H1 (cell line): ENCODE measurements at regions of chr1 and their contacts with region 1.

Region 1: DNA sequence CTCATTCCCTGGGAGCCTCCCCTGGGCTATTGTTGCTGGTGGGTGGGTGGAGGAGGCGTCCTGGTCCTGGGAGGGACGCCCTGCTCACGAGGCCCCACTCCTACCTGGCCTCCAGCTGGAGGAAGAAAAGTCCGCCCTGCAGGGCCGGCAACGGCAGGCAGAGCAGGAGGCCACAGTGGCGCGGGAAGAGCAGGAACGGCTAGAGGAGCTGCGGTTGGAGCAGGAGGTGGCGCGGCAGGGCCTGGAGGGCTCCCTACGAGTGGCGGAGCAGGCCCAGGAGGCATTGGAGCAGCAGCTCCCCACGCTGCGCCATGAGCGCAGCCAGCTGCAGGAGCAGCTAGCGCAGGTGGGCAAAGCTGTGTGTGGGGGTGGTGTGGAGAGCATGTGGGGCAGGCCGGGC is 24.9 kb downstream of the CROCC start:
- DNase-seq: no peak
- H3K4me3 ChIP-seq: no peak overlapping the region
- H3K27ac ChIP-seq: no peak overlapping the region
- H3K4me1 ChIP-seq: no peaks in the 10 kb centered on the region
- H3K27me3 ChIP-seq: no peaks in the 10 kb centered on the region
- CTCF ChIP-seq: no peak
- EP300 ChIP-seq: no peak
- POLR2A ChIP-seq: no peak
- RAD21 ChIP-seq: no peak

Region 2: GRCh38 chr1:16618719-16619118 is 327.9 kb before region 1 on chr1:
- CTCF ChIA-PET with region 1: interaction called, 59 read pairs
- POLR2A ChIA-PET with region 1: interaction called, 8 read pairs
- DNase-seq: peak; percentile 64 to 93
- H3K4me3 ChIP-seq: no peak overlapping the region
- H3K27ac ChIP-seq: no peak overlapping the region
- H3K4me1 ChIP-seq: peaks cover 0 to 3% (median under 1%) of the 10 kb centered on the region in 4 experiments; a peak in 3 of 7 replicates
- H3K27me3 ChIP-seq: peaks cover 6 to 17% (median 14%) of the 10 kb centered on the region in 4 experiments
- CTCF ChIP-seq: peak in 2 of 3 experiments; percentile 44 to 59; a peak in 3 of 4 replicates
- EP300 ChIP-seq: no peak
- POLR2A ChIP-seq: no peak
- RAD21 ChIP-seq: peak; percentile 47 to 54

Region 3: GRCh38 chr1:16883008-16883407 is 63.6 kb before region 1 on chr1:
- CTCF ChIA-PET with region 1: no interaction called
- POLR2A ChIA-PET with region 1: no interaction called
- DNase-seq: no peak
- H3K4me3 ChIP-seq: no peak overlapping the region
- H3K27ac ChIP-seq: no peak overlapping the region
- H3K4me1 ChIP-seq: no peaks in the 10 kb centered on the region
- H3K27me3 ChIP-seq: no peaks in the 10 kb centered on the region
- CTCF ChIP-seq: no peak
- EP300 ChIP-seq: no peak
- POLR2A ChIP-seq: no peak
- RAD21 ChIP-seq: no peak

Region 4: DNA sequence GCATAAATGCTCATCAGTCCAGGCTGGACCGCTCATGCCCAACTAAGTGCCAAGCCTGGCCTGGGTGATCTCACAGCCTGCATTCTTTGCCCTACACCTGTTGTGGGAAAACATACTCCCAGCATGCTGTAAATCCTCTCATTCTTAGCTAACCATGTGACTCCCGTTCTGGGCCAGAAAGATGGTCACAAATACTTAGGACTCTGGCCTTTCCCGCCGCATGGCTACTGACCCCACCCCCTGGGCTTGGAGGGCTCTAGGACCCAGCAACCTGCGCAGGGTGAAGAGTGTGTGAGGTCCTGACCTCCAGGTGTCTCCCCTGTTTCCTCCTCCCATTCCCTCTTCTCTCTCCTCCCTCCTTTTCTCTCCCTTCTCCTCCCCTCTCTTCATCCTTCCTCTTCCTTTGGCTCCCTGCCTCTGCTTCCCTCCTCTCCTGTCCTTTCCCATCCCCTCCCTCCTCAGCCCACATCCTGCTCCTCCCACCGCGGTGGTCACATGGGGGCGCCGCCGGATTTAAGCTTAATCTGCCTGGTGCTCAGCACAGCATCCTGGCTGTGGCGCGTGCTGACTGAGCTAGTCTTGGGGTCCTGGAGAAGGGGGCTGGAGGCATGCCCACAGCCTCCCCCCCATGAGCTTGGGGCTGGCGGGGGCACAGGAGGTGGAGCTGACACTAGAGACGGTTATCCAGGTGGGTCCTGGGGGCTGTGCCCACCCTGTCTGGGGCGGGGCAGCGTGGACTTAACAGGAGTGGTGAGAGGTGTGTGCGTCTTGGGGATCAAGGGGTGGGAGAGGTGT is 25.1 kb before region 1 on chr1 and contains the start of gene CROCC:
- CTCF ChIA-PET with region 1: interaction called, 11 read pairs
- POLR2A ChIA-PET with region 1: interaction called, 4 read pairs
- DNase-seq: peak; percentile 75 to 88
- H3K4me3 ChIP-seq: peak within 1 kb of the TSS; percentile 42 to 79 (median 54)
- H3K27ac ChIP-seq: 0 out of 2 replicates have a peak within 1 kb of the TSS, but pooled peaks have one; percentile 32
- H3K4me1 ChIP-seq: peaks cover 0 to 29% (median 16%) of the 10 kb centered on the region in 4 experiments; a peak in 6 of 7 replicates
- H3K27me3 ChIP-seq: no peaks in the 10 kb centered on the region
- CTCF ChIP-seq: peak in 1 of 3 experiments; percentile 13; a peak in 1 of 4 replicates
- EP300 ChIP-seq: peak in 1 of 2 experiments; percentile 56; a peak in 1 of 3 replicates
- POLR2A ChIP-seq: peak in 1 of 2 experiments; percentile 83; a peak in 2 of 3 replicates
- RAD21 ChIP-seq: 0 out of 4 replicates have a peak, but pooled peaks of 1 of the 2 experiments have one; percentile 14
- total RNA-seq, gene CROCC: 39.5 and 42.3 TPM in 2 replicates

Region 5: GRCh38 chr1:16960560-16961296 is 14.1 kb after region 1 on chr1:
- CTCF ChIA-PET with region 1: interaction called, 155 read pairs
- POLR2A ChIA-PET with region 1: interaction called, 3 read pairs
- DNase-seq: peak; percentile 84 to 97
- H3K4me3 ChIP-seq: peak overlapping the region; percentile 5 to 46 (median 23); a peak in 7 of 8 replicates
- H3K27ac ChIP-seq: no peak overlapping the region
- H3K4me1 ChIP-seq: no peaks in the 10 kb centered on the region
- H3K27me3 ChIP-seq: no peaks in the 10 kb centered on the region
- CTCF ChIP-seq: peak; percentile 80 to 87 (median 84)
- EP300 ChIP-seq: 0 out of 3 replicates have a peak, but pooled peaks of 1 of the 2 experiments have one; percentile 25
- POLR2A ChIP-seq: peak in 1 of 2 experiments; percentile 66; a peak in 2 of 3 replicates
- RAD21 ChIP-seq: peak; percentile 47 to 53

Region 6: DNA sequence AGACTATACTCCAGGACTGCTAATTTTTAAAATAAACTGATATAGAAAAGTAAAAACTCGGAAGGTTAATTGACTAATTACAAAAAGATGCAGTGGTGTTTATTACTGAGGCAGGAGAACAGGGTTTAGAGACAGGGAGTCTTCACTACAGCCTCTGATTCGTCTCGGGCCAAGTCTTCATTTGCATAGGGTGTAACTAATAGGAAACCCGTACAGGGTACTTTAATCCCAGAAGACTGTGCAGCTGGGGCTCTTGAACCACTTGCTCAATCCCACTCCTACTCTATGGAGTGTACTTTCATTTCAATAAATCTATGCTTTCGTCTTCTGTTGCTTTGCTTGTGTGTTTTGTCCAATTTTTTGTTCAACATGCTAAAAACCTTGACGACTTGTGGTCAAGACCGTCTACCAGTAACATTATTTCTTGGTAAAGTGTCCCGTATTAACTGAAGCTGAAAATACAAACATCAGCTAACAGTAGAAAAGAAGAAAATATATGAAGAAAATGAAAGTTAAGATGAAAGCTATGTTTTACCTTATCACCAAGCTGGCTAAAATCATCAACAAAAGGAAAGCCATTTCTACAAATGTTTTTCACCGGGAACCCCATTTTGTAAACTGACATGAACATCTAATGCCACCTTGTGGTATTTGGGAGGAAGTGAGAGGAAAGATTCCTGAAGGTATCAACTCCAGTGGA is 99.1 kb after region 1 on chr1:
- CTCF ChIA-PET with region 1: interaction called, 20 read pairs
- POLR2A ChIA-PET with region 1: interaction called, 4 read pairs
- DNase-seq: no peak
- H3K4me3 ChIP-seq: no peak overlapping the region
- H3K27ac ChIP-seq: peak overlapping the region; percentile 3; the same call in 1 of the 2 replicates
- H3K4me1 ChIP-seq: no peaks in the 10 kb centered on the region
- H3K27me3 ChIP-seq: no peaks in the 10 kb centered on the region
- CTCF ChIP-seq: peak in 2 of 3 experiments; percentile 62 to 64; a peak in 3 of 4 replicates
- EP300 ChIP-seq: no peak
- POLR2A ChIP-seq: no peak
- RAD21 ChIP-seq: peak; percentile 78 to 81